ENCODE measurements at regions of chr1 and their contacts with region 1.

Region 1: DNA sequence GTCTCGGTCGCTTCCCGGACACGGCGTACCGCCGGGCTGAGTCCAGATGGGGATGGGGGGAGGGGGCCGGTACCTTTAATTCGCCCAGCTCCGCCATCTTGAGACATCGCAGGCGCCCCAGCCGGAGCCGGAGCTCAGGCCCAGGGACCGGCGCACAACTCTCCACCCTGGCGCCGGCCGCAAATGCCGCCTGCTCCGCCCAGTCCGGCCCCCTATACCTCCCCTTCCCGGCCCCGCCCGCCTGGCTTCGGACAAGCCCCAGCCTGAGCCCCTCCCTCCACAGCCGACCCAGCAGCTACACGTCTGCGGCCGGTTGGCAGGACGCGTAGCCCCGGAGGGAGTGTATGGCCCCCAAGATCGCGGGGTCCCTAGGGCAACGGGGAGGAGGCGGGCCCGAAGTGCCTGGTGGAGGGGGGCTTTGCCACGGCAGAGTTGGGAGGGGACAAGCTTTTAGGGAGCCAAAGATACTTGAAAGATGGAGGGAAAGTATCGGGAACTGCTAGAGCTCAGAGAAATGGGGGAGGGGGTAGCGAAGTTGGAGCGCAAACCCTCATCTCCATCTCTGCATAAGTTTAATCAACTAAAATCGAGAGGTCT is at the start of gene PIAS3:
- DNase-seq: peak; percentile 91
- ATAC-seq: peak; percentile 86
- H3K4me3 Mint-ChIP-seq: peak within 1 kb of the TSS; percentile 95
- H3K27ac Mint-ChIP-seq: peak within 1 kb of the TSS; percentile 87
- H3K4me1 Mint-ChIP-seq: peaks cover 21% of the 10 kb centered on the region
- H3K27me3 Mint-ChIP-seq: peaks cover 11% of the 10 kb centered on the region
- total RNA-seq, gene PIAS3: 19.8 to 23.7 TPM

Region 2: DNA sequence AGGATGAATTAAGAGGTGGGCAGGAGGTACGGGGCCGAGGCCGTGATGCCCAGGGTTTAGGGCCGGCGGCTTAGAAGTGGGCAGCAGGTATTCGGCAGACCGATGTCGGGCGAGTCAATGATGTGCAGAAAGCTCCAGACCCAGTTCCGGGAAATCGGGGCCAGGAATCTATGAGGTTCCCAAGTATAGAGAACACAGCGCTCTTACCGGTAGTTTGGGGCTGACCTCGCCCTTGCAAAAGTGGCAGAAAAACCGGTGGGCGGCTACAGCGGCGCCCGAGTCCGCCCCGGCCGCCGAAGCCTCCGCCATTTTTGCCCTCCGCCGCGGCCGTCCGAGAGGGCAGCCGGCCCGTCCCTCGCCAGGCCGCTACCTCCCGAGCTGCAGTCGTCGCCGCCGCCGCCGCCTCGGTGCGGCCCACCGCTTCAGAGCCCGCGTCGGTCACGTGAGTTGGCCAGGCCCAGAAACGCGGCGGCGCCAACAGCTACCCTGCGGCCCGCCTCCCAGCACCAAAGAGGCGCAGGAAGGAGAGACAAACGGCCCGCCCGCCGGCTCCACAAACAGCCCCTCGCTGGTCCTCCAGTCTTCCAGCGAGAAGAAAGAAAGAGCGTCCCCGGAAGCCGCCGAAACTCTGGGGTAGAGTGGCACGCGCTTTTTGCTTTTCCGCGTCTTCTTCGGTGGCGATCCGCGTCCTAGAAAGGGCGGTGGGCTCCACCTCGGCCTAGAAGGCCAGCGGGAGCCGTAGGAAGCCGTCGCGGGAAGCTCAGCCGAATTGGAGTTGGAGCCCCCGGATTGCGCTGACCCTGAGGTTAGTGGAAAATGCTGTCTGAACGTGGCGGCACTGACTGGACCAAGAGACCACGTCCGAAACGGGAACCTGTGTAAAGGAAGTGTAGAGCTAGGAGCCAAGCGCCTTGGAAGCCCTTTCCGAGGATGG is 35.2 kb before region 1 on chr1 and contains the starts of genes POLR3C and RNF115:
- CTCF ChIA-PET with region 1: interaction called, 3 read pairs
- POLR2A ChIA-PET with region 1: interaction called, 11 read pairs
- DNase-seq: peak; percentile 94
- ATAC-seq: peak; percentile 95
- H3K4me3 Mint-ChIP-seq: peak within 1 kb of the TSS; percentile 97
- H3K27ac Mint-ChIP-seq: peak within 1 kb of the TSS; percentile 94
- H3K4me1 Mint-ChIP-seq: peaks cover 33% of the 10 kb centered on the region
- H3K27me3 Mint-ChIP-seq: no peaks in the 10 kb centered on the region
- total RNA-seq, gene POLR3C: 29.7 to 31.5 TPM
- total RNA-seq, gene RNF115: 15.1 to 15.5 TPM

Region 3: GRCh38 chr1:145879775-145880174 is 20.8 kb after region 1 on chr1:
- CTCF ChIA-PET with region 1: interaction called, 12 read pairs
- POLR2A ChIA-PET with region 1: interaction called, 3 read pairs
- DNase-seq: no peak
- ATAC-seq: no peak
- H3K4me3 Mint-ChIP-seq: no peak overlapping the region
- H3K27ac Mint-ChIP-seq: no peak overlapping the region
- H3K4me1 Mint-ChIP-seq: peaks cover 1% of the 10 kb centered on the region
- H3K27me3 Mint-ChIP-seq: peaks cover 32% of the 10 kb centered on the region

Region 4: GRCh38 chr1:145906954-145907753 is 48.2 kb after region 1 on chr1:
- CTCF ChIA-PET with region 1: interaction called, 19 read pairs
- POLR2A ChIA-PET with region 1: interaction called, 3 read pairs
- DNase-seq: no peak
- ATAC-seq: no peak
- H3K4me3 Mint-ChIP-seq: no peak overlapping the region
- H3K27ac Mint-ChIP-seq: no peak overlapping the region
- H3K4me1 Mint-ChIP-seq: peaks cover 7% of the 10 kb centered on the region
- H3K27me3 Mint-ChIP-seq: no peaks in the 10 kb centered on the region

Region 5: GRCh38 chr1:145927063-145927886 is 68.3 kb after region 1 on chr1 and contains the start of gene RBM8A:
- CTCF ChIA-PET with region 1: interaction called, 3 read pairs
- POLR2A ChIA-PET with region 1: interaction called, 22 read pairs
- DNase-seq: peak; percentile 98
- ATAC-seq: peak; percentile 98
- H3K4me3 Mint-ChIP-seq: no peak within 1 kb of the TSS
- H3K27ac Mint-ChIP-seq: peak within 1 kb of the TSS; percentile 79
- H3K4me1 Mint-ChIP-seq: peaks cover 25% of the 10 kb centered on the region
- H3K27me3 Mint-ChIP-seq: no peaks in the 10 kb centered on the region
- total RNA-seq, gene RBM8A: 202 to 204 TPM

Region 6: GRCh38 chr1:145947551-145947950 is 88.6 kb after region 1 on chr1:
- CTCF ChIA-PET with region 1: no interaction called
- POLR2A ChIA-PET with region 1: no interaction called
- DNase-seq: no peak
- ATAC-seq: no peak
- H3K4me3 Mint-ChIP-seq: no peak overlapping the region
- H3K27ac Mint-ChIP-seq: no peak overlapping the region
- H3K4me1 Mint-ChIP-seq: peaks cover 21% of the 10 kb centered on the region
- H3K27me3 Mint-ChIP-seq: no peaks in the 10 kb centered on the region

Region 7: DNA sequence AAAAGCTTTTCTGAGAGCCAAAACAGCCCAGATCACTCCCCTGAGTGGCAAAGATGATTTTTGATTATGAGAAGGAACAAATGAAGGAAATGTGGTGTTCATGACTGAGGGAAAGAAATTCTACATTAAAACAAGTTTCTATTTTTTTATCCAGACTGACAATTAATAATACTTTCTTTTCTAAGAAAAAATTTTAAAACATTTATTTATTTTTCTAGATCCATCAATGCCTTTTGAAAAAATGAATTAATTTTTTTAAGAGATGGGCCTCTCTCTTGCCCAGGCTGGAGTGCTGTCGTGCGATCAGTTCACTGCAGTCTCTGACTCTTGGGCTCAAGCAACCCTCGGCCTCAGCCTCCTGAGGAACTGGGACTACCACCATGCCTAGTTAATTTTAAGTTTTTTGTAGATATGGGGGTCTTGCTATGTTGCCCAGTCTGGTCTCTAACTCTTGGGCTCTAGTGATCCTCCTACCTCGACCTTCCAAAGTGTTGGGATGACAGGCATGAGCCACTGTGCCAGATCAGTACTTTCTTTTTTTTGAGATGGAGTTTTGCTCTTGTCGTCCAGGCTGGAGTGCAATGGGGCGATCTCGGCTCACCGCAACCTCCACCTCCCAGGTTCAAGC is 148.6 kb after region 1 on chr1:
- CTCF ChIA-PET with region 1: interaction called, 15 read pairs
- POLR2A ChIA-PET with region 1: interaction called, 3 read pairs
- DNase-seq: no peak
- ATAC-seq: no peak
- H3K4me3 Mint-ChIP-seq: peak overlapping the region; percentile 69
- H3K27ac Mint-ChIP-seq: peak overlapping the region; percentile 91
- H3K4me1 Mint-ChIP-seq: peaks cover 39% of the 10 kb centered on the region
- H3K27me3 Mint-ChIP-seq: no peaks in the 10 kb centered on the region